Lower lobe of right lung (tissue), 2 donors: ENCODE measurements at regions of chr18 and their contacts with region 1.

Region 1: DNA sequence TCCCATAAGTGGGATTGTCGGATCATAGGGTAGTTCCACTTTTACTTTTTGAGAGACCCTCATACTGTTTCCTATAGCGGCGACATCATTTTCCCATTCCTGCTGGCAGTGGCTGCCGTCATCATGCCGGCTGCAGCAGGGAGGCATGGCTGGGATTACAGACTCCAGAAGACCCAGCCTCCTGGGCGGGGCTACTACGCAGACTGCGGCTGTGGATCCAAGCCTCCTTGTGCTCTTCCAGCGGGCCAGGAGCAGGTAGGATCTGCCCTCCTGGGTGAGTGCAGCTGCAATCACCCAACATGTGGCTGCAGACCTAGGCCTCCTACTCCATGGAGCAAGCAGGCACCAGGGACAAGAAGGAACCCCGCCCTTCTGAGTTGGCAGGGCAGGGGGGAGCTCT is 359.2 kb downstream of the GALR1 start:
- DNase-seq: no peak
- ATAC-seq: no peak
- H3K4me3 ChIP-seq: no peak overlapping the region
- H3K27ac ChIP-seq: no peak overlapping the region
- H3K4me1 ChIP-seq: no peaks in the 10 kb centered on the region
- H3K27me3 ChIP-seq: no peaks in the 10 kb centered on the region
- CTCF ChIP-seq: no peak

Region 2: DNA sequence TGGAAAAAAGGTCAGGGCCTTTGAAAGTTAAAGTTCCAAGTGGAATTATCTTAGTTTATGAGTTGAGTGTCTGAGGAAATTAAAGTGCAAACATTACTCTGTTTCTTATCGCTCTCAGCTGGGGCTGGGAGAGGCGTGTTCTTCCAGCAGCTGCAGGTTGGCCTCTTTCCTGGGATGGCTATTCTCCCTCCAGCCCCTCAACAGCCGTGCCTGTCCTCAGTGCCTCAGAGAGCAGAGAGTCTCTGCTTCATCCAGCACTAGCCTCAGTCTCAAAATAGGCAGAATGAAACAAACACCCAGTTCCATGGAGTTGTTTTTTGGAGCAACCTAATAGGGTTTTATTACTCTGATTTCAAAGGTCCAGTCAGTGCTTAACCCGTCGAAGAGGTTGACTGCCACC is 61.0 kb before region 1 on chr18:
- intact Hi-C with region 1: loop called (anchors 10 kb)
- DNase-seq: no peak
- ATAC-seq: peak; percentile 52 to 62
- H3K4me3 ChIP-seq: no peak overlapping the region
- H3K27ac ChIP-seq: no peak overlapping the region
- H3K4me1 ChIP-seq: no peaks in the 10 kb centered on the region
- H3K27me3 ChIP-seq: no peaks in the 10 kb centered on the region
- CTCF ChIP-seq: no peak